GM12878 (cell line): ENCODE measurements at regions of chr17 and their contacts with region 1.

Region 1: DNA sequence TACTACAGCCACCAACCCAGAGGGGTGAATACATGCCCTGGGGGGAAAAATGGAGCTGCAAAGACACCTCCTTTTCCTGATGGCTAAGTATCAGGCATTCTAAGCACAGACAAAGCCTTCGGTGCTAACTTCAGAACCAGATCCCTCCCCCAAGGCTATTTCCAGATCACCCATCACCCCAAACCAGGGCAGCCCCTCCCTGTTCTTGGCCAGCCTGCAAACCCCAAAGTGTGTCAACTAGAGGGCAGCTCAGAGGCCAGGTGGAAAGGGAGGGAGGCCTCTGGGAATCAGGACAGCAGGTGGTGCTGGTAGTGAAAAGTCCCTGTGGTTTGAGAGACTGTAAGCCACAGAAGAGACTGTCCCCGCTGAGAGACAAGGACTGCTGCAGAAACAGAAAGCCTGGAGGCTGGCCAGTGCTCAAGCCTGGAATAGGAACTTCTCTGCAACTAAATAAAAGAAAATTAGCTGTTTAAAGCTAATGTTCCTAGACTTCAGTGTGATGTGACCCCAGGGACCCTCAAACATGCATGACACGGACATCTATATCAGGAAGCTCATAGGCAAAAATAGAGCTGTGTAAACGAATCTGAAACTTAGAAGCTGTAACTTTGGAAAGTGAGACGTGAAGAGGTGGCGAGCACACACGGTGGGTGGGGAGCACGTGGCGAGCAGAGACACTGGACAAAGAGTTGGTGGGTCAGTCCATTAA is 9.1 kb downstream of the TUBG1 start:
- DNase-seq: peak; percentile 93
- ATAC-seq: peak; percentile 86
- H3K4me3 ChIP-seq: peak overlapping the region; percentile 58
- H3K27ac ChIP-seq: peak overlapping the region; percentile 91
- H3K4me1 ChIP-seq: peaks cover 33% of the 10 kb centered on the region
- H3K27me3 ChIP-seq: no peaks in the 10 kb centered on the region
- CTCF ChIP-seq: peak in 1 of 3 experiments; percentile 62; a peak in 3 of 6 replicates
- EP300 ChIP-seq: peak; percentile 49 to 84; a peak in 2 of 4 replicates
- POLR2A ChIP-seq: no peak; the same call in 1 of the 2 replicates
- RAD21 ChIP-seq: peak; percentile 64

Region 2: DNA sequence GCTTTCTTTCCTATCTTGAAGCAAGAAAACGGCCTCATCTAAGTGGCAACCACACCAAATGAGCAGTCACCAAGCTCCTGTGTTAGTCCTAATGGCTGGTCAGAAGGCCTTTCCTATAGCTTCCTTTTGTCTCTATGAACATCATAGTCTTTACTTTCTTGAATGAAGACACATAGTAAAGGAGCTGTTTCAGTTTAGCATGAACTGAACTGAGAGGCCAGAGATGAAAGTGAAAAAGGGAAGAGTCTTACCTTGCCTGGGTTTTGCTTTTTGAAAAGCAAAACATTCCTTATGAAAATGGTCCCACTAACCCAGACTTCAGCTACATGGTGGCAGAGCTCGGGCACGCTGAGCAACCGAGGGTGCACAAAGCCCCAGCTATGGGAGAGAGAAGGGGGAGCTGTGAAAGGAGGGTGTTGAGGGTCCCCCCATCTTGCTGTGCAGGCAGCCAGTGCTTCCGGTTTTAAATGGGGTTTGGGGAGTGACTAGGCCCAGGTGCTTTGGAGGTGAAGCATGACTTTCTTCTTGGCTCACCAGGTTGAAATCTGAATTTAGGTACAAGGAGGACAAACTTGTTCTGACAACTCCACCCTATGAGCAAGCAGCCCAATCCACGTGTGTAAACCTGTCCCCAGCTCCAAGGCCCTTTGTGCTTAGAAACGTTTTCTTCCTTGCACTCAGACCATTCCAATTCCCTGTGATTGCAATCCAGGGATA is 31.9 kb before region 1 on chr17:
- CTCF ChIA-PET with region 1: interaction called, 9 read pairs
- POLR2A ChIA-PET with region 1: interaction called, 14 read pairs
- RAD21 ChIA-PET with region 1: interaction called, 55 read pairs
- SMC1A ChIA-PET with region 1: interaction called, 18 read pairs
- in situ Hi-C with region 1: no loop called
- intact Hi-C with region 1: no loop called
- DNase-seq: no peak
- ATAC-seq: peak; percentile 94
- H3K4me3 ChIP-seq: peak overlapping the region; percentile 41; the same call in 1 of the 2 replicates
- H3K27ac ChIP-seq: peak overlapping the region; percentile 60
- H3K4me1 ChIP-seq: peaks cover 32% of the 10 kb centered on the region
- H3K27me3 ChIP-seq: no peaks in the 10 kb centered on the region
- CTCF ChIP-seq: no peak
- EP300 ChIP-seq: no peak
- POLR2A ChIP-seq: peak; percentile 39; the same call in 1 of the 2 replicates
- RAD21 ChIP-seq: no peak

Region 3: DNA sequence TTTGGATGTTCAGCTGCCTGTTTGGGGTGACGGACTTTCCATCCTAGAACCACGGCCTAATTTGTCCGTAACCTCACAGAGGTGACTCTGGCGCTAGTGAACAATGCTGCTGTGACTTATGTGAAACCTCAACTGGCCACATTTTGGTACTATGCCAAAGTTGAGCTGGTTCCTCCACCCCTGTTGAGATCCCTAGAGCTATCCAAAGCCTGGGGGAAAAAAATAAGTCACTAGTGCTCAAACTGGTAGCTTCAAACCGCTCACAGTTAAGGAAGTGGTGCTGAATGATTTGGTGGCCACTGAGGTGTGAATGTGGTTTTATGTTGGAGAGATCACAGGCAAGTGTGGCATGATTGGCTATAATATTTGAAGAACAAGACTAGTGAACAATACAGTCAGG is 29.2 kb after region 1 on chr17:
- CTCF ChIA-PET with region 1: interaction called, 3 read pairs
- POLR2A ChIA-PET with region 1: interaction called, 4 read pairs
- RAD21 ChIA-PET with region 1: interaction called, 8 read pairs
- SMC1A ChIA-PET with region 1: interaction called, 12 read pairs
- in situ Hi-C with region 1: no loop called
- intact Hi-C with region 1: no loop called
- DNase-seq: peak; percentile 46
- ATAC-seq: peak; percentile 91
- H3K4me3 ChIP-seq: no peak overlapping the region
- H3K27ac ChIP-seq: no peak overlapping the region
- H3K4me1 ChIP-seq: peaks cover 3% of the 10 kb centered on the region; the same call in 1 of the 2 replicates
- H3K27me3 ChIP-seq: no peaks in the 10 kb centered on the region
- CTCF ChIP-seq: no peak
- EP300 ChIP-seq: no peak
- POLR2A ChIP-seq: no peak
- RAD21 ChIP-seq: no peak

Region 4: DNA sequence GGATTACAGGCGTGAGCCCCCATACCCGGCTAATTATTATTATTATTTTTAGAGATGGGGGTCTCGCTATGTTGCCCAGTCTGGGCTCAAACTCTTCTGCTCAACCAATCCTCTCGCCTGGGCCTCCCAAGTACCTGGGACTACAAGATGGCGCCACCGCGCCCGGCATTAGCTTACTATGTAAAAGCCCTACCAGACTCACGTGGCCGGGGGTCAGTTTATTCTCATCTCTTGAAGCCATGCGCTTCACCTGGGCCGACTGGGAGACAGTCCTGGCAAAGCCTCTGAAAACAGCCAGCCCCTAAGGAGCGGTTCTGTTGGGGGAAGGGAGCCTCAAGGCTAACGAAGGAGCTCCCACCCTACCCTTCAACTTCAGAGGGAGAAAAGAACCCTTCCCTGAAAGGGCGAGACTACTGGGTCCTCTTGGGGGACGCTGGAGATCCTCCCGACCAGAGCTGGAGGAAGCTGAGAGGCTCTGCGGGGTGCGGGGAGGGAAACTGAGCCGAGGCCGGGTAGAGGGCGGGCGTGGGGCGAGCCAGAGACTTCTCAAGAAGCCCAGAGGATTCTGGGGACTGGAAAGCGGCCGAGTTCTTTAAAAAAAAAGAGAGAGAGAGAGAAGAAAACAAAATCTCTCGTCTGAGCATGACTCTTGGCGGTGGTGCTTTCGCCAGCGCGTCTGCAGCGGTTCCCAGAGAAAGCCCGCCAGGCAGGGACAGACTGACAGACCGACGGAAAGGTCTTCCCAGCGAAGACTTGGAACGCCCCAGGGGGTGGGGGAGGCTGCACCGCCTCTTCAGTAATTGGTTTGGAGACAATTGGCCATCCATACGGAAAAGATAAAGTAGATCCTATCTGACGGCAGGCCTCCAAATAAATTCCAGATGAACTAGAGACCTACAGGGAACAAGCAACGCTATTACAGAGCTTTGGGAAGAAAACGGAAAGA is 34.9 kb after region 1 on chr17:
- CTCF ChIA-PET with region 1: interaction called, 4 read pairs
- POLR2A ChIA-PET with region 1: interaction called, 20 read pairs
- RAD21 ChIA-PET with region 1: interaction called, 21 read pairs
- SMC1A ChIA-PET with region 1: interaction called, 17 read pairs
- in situ Hi-C with region 1: no loop called
- intact Hi-C with region 1: loop called (anchors 1 kb)
- DNase-seq: no peak
- ATAC-seq: no peak
- H3K4me3 ChIP-seq: no peak overlapping the region
- H3K27ac ChIP-seq: no peak overlapping the region
- H3K4me1 ChIP-seq: peaks cover 20% of the 10 kb centered on the region
- H3K27me3 ChIP-seq: no peaks in the 10 kb centered on the region
- CTCF ChIP-seq: no peak
- EP300 ChIP-seq: no peak
- POLR2A ChIP-seq: no peak
- RAD21 ChIP-seq: no peak

Region 5: DNA sequence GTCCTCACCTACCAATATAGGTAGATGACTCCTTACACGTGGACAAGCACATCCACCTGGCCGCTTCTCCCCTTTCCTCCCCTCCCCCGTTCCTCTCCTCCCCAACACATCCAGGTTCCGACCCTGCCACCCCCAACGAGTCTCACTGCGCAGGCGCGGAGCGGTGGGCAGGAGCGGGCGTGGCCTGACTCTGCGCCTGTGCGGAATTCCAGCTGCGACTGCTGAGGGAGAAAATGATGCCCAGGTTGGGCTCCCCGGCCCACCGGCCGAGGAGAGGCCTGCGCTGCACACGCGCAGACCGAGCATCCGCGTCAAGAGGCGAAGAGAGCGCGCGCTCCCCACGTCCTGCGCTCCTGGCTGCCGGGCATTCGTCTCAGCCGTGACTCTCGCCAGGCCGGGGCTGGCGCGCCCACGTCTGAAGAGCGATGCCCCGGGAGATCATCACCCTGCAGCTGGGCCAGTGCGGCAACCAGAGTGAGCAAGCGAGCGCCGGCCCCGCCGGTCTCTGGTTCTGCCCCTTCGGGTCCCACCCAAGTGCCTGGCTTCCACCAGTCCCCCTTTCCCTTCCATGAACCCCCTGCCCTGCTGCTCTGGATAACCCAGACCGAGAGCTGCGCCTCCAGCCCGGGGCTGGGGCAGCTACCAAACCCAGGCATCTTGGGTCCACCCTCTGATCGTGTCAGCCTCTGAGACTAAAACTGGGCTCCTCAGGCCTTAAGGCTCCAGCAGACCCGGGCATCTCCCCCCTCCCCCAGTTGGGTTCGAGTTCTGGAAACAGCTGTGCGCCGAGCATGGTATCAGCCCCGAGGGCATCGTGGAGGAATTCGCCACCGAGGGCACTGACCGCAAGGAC is 40.7 kb after region 1 on chr17 and contains the start of gene TUBG2:
- CTCF ChIA-PET with region 1: interaction called, 4 read pairs
- POLR2A ChIA-PET with region 1: interaction called, 20 read pairs
- RAD21 ChIA-PET with region 1: interaction called, 21 read pairs
- SMC1A ChIA-PET with region 1: interaction called, 17 read pairs
- in situ Hi-C with region 1: no loop called
- intact Hi-C with region 1: loop called (anchors 1 kb)
- DNase-seq: no peak
- ATAC-seq: peak; percentile 73
- H3K4me3 ChIP-seq: peak within 1 kb of the TSS; percentile 77
- H3K27ac ChIP-seq: peak within 1 kb of the TSS; percentile 42; the same call in 1 of the 2 replicates
- H3K4me1 ChIP-seq: peaks cover 33% of the 10 kb centered on the region
- H3K27me3 ChIP-seq: no peaks in the 10 kb centered on the region
- CTCF ChIP-seq: no peak
- EP300 ChIP-seq: no peak
- POLR2A ChIP-seq: peak; percentile 73
- RAD21 ChIP-seq: no peak
- polyA plus RNA-seq, gene TUBG2: 1.2 to 1.8 TPM